Activated T-helper 1 cell treated with anti-CD3 and anti-CD28 coated beads, Interleukin-12 subunit alpha, Interleukin-12 subunit beta, Interleukin-2, Interleukin-4 antibody, amounts not matched to agents 30 ng/mL and 10 ng/mL and 1 ng/mL, durations not matched to agents 14 hours and 24 hours and 36 hours (primary cell): ENCODE measurements at regions of chr14 and their contacts with region 1.

Region 1: DNA sequence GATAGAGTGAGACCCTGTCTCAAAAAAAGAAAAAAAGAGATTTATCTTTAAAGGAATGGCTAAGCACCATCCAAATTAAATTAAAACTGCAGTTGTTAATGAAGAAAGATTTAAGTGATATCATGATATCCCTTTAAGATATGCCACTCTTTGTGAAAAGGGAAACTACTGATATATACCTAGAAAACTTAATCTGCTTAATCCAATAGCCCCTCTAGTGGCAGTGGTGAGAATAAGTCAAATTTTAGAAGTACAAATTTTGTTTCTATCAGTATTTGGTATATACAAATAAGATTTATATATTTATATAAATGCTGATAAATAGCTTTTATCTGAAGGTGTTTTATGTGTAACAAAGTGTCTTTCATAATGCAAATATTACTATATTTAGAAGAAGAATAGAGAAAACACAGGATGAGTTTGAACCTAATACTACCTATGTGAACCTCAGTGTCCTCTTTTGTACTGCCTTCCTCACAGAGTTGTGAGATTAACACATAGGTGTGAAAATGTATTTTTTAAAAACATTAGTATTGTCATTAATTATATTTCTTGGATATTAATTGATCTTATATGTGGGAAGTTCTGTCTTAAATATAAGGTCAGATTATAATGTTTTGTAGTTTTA is 51.4 kb upstream of the GARIN2 start:
- DNase-seq: no peak
- H3K4me3 Mint-ChIP-seq: no peak overlapping the region
- H3K27ac Mint-ChIP-seq: no peak overlapping the region
- H3K4me1 Mint-ChIP-seq: peaks cover 12% of the 10 kb centered on the region
- H3K27me3 Mint-ChIP-seq: no peaks in the 10 kb centered on the region

Region 2: GRCh38 chr14:65336191-65336591 is 1801.7 kb before region 1 on chr14:
- intact Hi-C with region 1: loop called (anchors 5 kb)
- DNase-seq: peak; percentile 63
- H3K4me3 Mint-ChIP-seq: peak overlapping the region; percentile 91
- H3K27ac Mint-ChIP-seq: peak overlapping the region; percentile 96
- H3K4me1 Mint-ChIP-seq: peaks cover 59% of the 10 kb centered on the region
- H3K27me3 Mint-ChIP-seq: no peaks in the 10 kb centered on the region

Region 3: GRCh38 chr14:66610154-66610563 is 527.7 kb before region 1 on chr14:
- intact Hi-C with region 1: loop called (anchors 5 kb)
- DNase-seq: no peak
- H3K4me3 Mint-ChIP-seq: no peak overlapping the region
- H3K27ac Mint-ChIP-seq: peak overlapping the region; percentile 29
- H3K4me1 Mint-ChIP-seq: peaks cover 21% of the 10 kb centered on the region
- H3K27me3 Mint-ChIP-seq: peaks cover 5% of the 10 kb centered on the region

Region 4: GRCh38 chr14:66758031-66758613 is 379.7 kb before region 1 on chr14:
- intact Hi-C with region 1: loop called (anchors 10 kb)
- DNase-seq: no peak
- H3K4me3 Mint-ChIP-seq: no peak overlapping the region
- H3K27ac Mint-ChIP-seq: no peak overlapping the region
- H3K4me1 Mint-ChIP-seq: no peaks in the 10 kb centered on the region
- H3K27me3 Mint-ChIP-seq: no peaks in the 10 kb centered on the region

Region 5: DNA sequence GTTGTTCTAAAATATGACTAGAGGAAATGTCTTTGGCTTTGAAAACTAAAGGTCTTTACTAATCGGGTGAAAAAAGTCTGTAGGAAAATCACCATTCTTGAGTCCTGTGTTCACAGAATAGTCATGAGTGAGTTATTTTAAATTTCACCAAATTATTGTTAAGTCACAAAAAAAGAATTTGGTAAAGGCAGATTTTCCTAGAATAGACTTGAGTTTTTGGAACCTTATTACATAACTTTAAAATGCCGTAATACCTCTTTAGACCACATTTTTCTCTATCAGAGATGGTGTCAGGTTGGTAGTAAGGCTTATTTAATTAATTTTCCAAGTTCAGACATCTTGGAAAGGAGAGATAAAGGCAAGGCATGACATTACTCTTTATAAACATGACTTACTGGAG is 133.3 kb before region 1 on chr14:
- intact Hi-C with region 1: loop called (anchors 10 kb)
- DNase-seq: no peak
- H3K4me3 Mint-ChIP-seq: no peak overlapping the region
- H3K27ac Mint-ChIP-seq: no peak overlapping the region
- H3K4me1 Mint-ChIP-seq: peaks cover 8% of the 10 kb centered on the region
- H3K27me3 Mint-ChIP-seq: no peaks in the 10 kb centered on the region

Region 6: GRCh38 chr14:67158566-67158965 is 20.7 kb after region 1 on chr14:
- intact Hi-C with region 1: loop called (anchors 1 kb)
- DNase-seq: no peak
- H3K4me3 Mint-ChIP-seq: no peak overlapping the region
- H3K27ac Mint-ChIP-seq: no peak overlapping the region
- H3K4me1 Mint-ChIP-seq: peaks cover 17% of the 10 kb centered on the region
- H3K27me3 Mint-ChIP-seq: no peaks in the 10 kb centered on the region